Calu3 (cell line): ENCODE measurements at regions of chr1 and their contacts with region 1.

Region 1: DNA sequence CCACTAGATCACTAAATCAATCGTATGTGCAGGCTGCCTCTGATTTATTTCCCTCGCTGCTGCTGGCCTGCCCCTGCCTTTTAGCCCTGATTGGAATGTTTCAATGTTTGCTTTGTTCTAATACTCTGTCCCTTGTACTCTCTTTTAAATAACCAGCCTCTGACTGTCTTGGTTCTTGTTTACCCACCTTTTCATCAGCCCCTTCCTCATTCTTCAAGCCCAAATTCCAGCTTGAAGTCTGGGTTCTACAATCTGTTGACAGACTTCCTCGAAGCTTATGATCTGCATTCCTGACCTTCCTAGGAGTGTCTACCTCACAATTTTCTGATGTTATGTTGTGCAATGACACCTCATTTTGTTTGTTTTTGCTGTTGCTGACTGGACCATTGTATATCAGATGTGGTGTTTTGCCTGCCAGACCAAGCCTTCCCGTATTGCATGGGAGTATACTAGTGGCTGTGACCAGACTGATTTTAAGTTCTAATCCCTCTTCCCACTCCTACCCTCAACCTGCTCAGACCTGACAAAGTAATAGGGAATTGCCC is 46.6 kb upstream of the APOBEC4 start:
- DNase-seq: peak; percentile 73
- H3K4me3 Mint-ChIP-seq: peak overlapping the region; percentile 29
- H3K27ac Mint-ChIP-seq: peak overlapping the region; percentile 97
- H3K4me1 Mint-ChIP-seq: peaks cover 54% of the 10 kb centered on the region
- H3K27me3 Mint-ChIP-seq: no peaks in the 10 kb centered on the region
- CTCF ChIP-seq: no peak

Region 2: DNA sequence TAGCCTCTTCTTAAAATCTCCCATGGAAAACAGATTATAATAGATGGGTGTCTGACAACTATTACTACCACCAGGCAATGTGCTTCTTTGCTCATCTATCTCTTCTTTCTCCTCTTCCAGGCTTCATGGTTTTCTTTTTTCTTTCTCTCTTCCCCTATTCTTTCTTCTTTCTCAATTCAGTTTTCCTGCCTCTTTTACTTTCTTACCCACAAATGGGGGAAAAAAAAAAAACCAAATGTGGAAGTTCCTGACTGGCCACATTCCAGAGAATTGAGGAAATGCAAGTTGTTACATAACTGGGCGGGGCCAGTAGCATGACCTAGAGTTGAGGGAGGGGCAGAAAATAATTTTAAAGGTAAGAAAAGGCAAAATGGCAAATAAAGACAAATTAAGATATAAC is 238.3 kb before region 1 on chr1:
- CTCF ChIA-PET with region 1: no interaction called
- intact Hi-C with region 1: no loop called
- DNase-seq: peak; percentile 83
- H3K4me3 Mint-ChIP-seq: peak overlapping the region; percentile 7
- H3K27ac Mint-ChIP-seq: peak overlapping the region; percentile 58
- H3K4me1 Mint-ChIP-seq: peaks cover 27% of the 10 kb centered on the region
- H3K27me3 Mint-ChIP-seq: no peaks in the 10 kb centered on the region
- CTCF ChIP-seq: no peak

Region 3: GRCh38 chr1:183841950-183842794 is 142.5 kb after region 1 on chr1:
- CTCF ChIA-PET with region 1: no interaction called
- intact Hi-C with region 1: loop called (anchors 2 kb)
- DNase-seq: peak; percentile 44
- H3K4me3 Mint-ChIP-seq: peak overlapping the region; percentile 38
- H3K27ac Mint-ChIP-seq: peak overlapping the region; percentile 58
- H3K4me1 Mint-ChIP-seq: peaks cover 52% of the 10 kb centered on the region
- H3K27me3 Mint-ChIP-seq: no peaks in the 10 kb centered on the region
- CTCF ChIP-seq: no peak

Region 4: DNA sequence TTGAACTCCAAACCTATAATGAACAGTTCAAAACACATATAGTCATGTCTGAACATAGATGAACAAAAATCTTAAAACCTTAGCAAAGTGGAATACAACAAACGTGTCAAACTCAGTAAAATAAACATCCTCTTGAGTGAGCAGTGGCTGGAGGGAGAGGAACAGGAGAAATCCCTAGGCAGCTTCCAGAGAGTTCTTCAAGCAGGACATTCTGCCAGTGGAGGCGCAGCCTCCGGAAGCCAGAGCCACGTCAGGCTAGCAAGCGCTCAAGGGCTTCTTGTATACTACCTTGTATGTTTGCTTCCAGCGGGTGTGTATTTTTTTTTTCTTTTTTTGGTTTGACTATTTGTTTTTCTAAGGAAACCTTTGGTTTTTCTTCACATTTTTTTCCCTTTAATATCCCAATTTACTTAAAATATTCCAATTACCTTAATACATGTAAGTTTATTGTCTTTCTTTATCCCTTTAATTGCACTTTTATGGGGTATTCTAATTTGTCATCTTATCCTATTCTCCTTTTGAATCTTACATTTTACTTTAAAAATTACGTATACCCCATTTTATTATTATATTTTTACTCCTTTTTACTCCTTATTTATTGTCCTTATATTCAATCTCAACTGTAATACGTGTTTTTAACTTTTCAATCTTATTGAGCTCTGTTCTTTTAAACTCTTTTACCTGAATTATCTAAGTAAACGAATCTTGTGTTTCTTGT is 295.8 kb after region 1 on chr1:
- CTCF ChIA-PET with region 1: no interaction called
- intact Hi-C with region 1: loop called (anchors 5 kb)
- DNase-seq: no peak
- H3K4me3 Mint-ChIP-seq: no peak overlapping the region
- H3K27ac Mint-ChIP-seq: no peak overlapping the region
- H3K4me1 Mint-ChIP-seq: peaks cover 65% of the 10 kb centered on the region
- H3K27me3 Mint-ChIP-seq: no peaks in the 10 kb centered on the region
- CTCF ChIP-seq: no peak